ENCODE measurements at regions of chr7 and their contacts with region 1.

Region 1: DNA sequence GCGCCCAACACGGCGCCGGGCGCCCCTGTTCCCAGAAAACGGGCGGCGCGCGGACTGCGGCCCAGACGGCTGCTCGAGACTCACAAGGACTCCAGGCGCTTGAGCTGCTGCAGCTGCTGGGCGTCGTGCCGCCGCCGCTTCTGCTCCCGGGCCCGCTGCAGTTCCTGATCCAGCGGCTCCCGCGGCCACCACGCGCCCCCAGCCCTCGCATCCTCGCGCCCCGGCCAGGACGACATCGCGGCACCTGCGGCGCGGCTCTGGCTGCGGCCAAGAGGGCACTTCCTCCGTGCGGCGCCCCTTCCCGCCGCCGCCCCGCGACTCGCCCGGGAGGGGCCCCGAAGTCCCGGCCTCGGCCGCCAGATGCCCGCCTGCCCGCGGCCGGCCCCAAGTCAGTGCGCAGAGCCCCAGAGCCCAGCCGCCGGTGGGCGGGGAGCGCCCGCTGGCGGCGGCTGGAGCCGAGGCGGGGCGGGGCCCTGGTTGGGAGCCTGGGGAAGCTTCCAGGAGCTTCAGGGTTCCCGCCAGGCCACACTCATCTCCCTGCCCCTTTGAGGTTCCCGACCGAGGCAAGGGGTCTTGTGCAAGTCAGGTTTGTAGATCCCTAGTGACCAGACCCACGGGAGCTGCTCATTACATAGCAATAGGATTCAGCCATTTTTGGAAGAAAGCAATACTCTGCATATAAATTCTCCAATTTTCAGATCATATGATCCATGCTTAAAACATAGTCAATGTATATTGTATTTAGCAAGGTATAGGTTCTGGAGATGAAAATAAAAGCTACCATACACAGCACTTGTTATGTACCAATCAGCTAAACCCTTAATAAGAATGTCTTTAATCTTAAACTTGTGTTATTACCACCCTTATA is 14.2 kb upstream of the FKBP9 start:
- DNase-seq: peak; percentile 65
- H3K4me3 Mint-ChIP-seq: peak overlapping the region; percentile 91
- H3K27ac Mint-ChIP-seq: peak overlapping the region; percentile 76
- H3K4me1 Mint-ChIP-seq: peaks cover 29% of the 10 kb centered on the region
- H3K27me3 Mint-ChIP-seq: peaks cover 10% of the 10 kb centered on the region

Region 2: GRCh38 chr7:32846701-32847100 is 96.3 kb before region 1 on chr7:
- intact Hi-C with region 1: loop called (anchors 1 kb)
- DNase-seq: peak; percentile 74
- H3K4me3 Mint-ChIP-seq: peak overlapping the region; percentile 19
- H3K27ac Mint-ChIP-seq: no peak overlapping the region
- H3K4me1 Mint-ChIP-seq: peaks cover 11% of the 10 kb centered on the region
- H3K27me3 Mint-ChIP-seq: peaks cover 28% of the 10 kb centered on the region